Lower leg skin (tissue), 4 donors: ENCODE measurements at regions of chr1 and their contacts with region 1.

Region 1: DNA sequence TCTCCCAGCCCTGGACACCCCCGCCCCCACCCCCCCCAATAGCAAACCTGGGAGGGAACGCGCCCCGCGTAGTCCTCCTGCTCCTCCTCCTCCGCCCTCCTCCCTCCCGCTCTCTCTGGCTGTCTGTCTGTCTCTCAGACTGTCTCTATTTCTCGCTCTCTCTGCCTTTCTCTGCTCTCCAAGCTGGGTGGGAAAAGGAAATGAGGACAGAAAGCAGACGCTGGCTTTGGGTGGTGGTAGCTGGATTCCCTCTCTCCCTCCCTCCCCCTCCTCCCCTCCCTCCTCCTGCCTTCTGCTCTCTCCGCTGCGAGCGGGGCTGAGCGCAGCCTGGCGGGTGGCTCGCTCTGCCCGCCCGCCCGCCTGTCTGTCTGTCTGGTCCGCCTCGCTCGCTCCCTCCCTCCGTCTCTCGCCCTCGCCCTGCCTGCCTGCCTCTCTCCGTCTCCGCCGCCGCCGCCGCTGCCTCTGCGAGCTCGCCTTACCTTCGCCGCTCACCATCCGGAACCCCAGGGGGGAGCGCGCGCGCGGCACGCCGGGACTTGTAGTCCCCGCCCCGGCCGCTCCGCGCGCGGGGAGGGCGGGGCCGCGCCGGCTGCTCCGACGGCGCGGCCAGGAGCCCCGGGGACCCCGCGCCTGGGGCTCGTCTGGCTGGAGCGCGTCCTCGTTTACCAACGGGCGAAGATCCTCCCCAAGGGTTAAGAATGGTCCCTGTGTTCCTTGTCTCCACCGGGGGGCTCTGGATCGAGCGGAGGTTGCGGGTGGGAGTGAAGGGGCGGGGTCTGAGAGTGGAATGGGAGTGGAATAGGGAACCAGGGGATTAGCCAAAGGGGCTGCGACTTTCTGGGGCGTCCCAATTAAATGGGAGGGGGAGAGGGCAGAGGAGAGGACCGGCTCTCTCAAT is at the start of gene AHDC1:
- DNase-seq: peak; percentile 91 to 98
- H3K4me3 ChIP-seq: peak within 1 kb of the TSS; percentile 90
- CTCF ChIP-seq: no peak
- POLR2A ChIP-seq: peak in 1 of 2 donors; percentile 57
- total RNA-seq, gene AHDC1: 37.7 to 63.0 (median 52.5) TPM

Region 2: GRCh38 chr1:27300341-27301051 is 303.4 kb before region 1 on chr1:
- intact Hi-C with region 1: loop called (anchors 10 kb)
- DNase-seq: peak; percentile 78 to 96
- H3K4me3 ChIP-seq: no peak overlapping the region
- CTCF ChIP-seq: peak in 1 of 3 donors; percentile 90
- POLR2A ChIP-seq: no peak

Region 3: DNA sequence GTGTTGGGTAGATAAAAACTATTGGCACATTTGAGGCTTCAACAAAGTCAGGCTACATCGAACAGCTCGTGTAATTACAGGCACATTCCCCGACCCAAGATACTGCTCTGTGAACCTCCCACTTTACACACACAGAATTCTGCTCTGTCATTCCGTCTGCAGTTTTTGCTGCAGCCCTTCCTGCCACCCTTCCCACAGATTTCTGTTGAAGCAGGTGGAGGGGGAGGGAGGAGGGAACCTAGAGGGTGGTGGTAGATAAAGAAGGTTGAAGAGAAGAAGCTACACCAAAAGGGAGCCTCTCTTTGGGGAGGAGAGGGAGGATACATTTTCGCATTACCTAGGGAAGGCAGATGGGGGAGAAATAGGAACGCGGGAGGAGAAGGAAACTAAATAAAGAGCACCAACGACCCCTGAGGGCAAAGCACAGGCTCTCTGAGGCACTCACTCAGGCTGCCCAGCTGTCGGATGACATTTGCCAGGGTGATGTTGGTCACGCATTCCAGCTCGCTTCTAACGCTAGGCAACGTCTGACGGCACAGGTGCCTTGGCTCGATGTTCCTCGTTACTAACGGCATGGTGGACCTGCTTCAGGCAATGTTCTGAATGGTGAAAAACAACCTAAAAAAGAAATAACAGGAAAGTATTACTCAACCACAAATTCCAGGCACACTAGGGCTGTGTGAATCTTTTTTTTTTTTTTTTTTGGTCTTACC is 175.5 kb before region 1 on chr1:
- intact Hi-C with region 1: no loop called
- DNase-seq: no peak
- H3K4me3 ChIP-seq: no peak overlapping the region
- CTCF ChIP-seq: no peak
- POLR2A ChIP-seq: no peak

Region 4: DNA sequence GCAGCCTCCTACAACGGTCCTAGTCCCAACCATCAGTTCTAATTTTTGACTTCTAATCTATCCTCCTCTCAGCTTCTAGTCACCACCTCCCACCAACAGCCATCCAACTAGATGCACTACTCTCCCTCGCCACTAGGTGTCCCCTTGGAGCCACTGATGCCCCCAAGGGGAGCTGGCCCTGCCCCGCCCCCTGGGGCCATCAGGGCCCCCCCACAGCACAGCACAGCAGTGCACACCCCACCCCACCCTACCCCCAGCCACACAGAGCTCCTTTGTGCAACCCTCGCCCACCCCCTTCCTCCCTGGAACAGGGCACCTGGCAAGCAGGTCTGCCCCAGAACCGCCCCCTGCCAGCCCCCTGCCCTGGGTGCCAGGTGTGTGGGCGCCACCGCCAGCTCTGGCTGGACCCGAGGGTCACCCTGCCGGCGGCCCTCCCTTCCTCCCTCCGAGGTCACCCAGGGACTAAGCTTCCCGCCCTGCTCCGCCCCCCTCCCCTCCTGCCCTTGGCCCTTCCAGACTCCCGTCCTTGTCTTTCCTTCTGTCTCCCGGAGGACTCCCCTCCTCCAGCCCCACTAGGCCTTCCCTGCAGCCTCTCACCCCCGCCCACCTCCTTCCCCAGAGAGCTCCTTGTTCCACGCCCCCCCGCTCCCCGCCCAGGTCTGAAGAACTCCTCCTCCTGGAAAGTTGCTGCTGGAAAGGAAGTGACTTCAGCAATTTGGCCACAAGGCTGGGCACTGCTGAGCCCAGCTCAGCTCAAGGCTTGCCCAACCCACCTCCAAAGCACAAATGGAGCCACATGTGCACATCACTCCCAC is 46.9 kb before region 1 on chr1:
- intact Hi-C with region 1: loop called (anchors 5 kb)
- DNase-seq: peak; percentile 93 to 98
- H3K4me3 ChIP-seq: no peak overlapping the region
- CTCF ChIP-seq: peak in 1 of 3 donors; percentile 71
- POLR2A ChIP-seq: no peak